ENCODE measurements at regions of chr6 and their contacts with region 1.

Region 1: GRCh38 chr6:116279260-116280063 is at the start of gene TSPYL1:
- DNase-seq: peak; percentile 89 to 98 (median 92)
- ATAC-seq: peak; percentile 84
- H3K4me3 ChIP-seq: peak within 1 kb of the TSS; percentile 76
- H3K4me3 Mint-ChIP-seq: peak within 1 kb of the TSS; percentile 96
- H3K27ac ChIP-seq: peak within 1 kb of the TSS; percentile 97 to 99
- H3K27ac Mint-ChIP-seq: peak within 1 kb of the TSS; percentile 95
- H3K4me1 ChIP-seq: peaks cover 41% of the 10 kb centered on the region
- H3K4me1 Mint-ChIP-seq: peaks cover 69% of the 10 kb centered on the region
- H3K27me3 ChIP-seq: no peaks in the 10 kb centered on the region
- H3K27me3 Mint-ChIP-seq: no peaks in the 10 kb centered on the region
- CTCF ChIP-seq: no peak
- total RNA-seq, gene TSPYL1: 225 to 226 TPM

Region 2: GRCh38 chr6:116217069-116217468 is 62.4 kb before region 1 on chr6:
- CTCF ChIA-PET with region 1: interaction called, 5 read pairs
- POLR2A ChIA-PET with region 1: interaction called, 12 read pairs
- intact Hi-C with region 1: loop called in 1 of 2 experiments (anchors 5 kb)
- DNase-seq: peak in 3 of 14 experiments; percentile 50 to 61 (median 59)
- ATAC-seq: peak; percentile 95
- H3K4me3 ChIP-seq: no peak overlapping the region
- H3K4me3 Mint-ChIP-seq: no peak overlapping the region
- H3K27ac ChIP-seq: no peak overlapping the region
- H3K27ac Mint-ChIP-seq: no peak overlapping the region
- H3K4me1 ChIP-seq: no peaks in the 10 kb centered on the region
- H3K4me1 Mint-ChIP-seq: peaks cover 7% of the 10 kb centered on the region
- H3K27me3 ChIP-seq: no peaks in the 10 kb centered on the region
- H3K27me3 Mint-ChIP-seq: no peaks in the 10 kb centered on the region
- CTCF ChIP-seq: peak; percentile 64

Region 3: GRCh38 chr6:116268589-116269293 is 10.7 kb before region 1 on chr6:
- CTCF ChIA-PET with region 1: interaction called, 42 read pairs
- POLR2A ChIA-PET with region 1: interaction called, 92 read pairs
- intact Hi-C with region 1: no loop called
- DNase-seq: peak in 3 of 14 experiments; percentile 67 to 81 (median 76)
- ATAC-seq: peak; percentile 95
- H3K4me3 ChIP-seq: no peak overlapping the region
- H3K4me3 Mint-ChIP-seq: no peak overlapping the region
- H3K27ac ChIP-seq: peak overlapping the region in 1 of 2 donors; percentile 10
- H3K27ac Mint-ChIP-seq: peak overlapping the region; percentile 4
- H3K4me1 ChIP-seq: peaks cover 9% of the 10 kb centered on the region
- H3K4me1 Mint-ChIP-seq: peaks cover 38% of the 10 kb centered on the region
- H3K27me3 ChIP-seq: no peaks in the 10 kb centered on the region
- H3K27me3 Mint-ChIP-seq: no peaks in the 10 kb centered on the region
- CTCF ChIP-seq: peak; percentile 94

Region 4: DNA sequence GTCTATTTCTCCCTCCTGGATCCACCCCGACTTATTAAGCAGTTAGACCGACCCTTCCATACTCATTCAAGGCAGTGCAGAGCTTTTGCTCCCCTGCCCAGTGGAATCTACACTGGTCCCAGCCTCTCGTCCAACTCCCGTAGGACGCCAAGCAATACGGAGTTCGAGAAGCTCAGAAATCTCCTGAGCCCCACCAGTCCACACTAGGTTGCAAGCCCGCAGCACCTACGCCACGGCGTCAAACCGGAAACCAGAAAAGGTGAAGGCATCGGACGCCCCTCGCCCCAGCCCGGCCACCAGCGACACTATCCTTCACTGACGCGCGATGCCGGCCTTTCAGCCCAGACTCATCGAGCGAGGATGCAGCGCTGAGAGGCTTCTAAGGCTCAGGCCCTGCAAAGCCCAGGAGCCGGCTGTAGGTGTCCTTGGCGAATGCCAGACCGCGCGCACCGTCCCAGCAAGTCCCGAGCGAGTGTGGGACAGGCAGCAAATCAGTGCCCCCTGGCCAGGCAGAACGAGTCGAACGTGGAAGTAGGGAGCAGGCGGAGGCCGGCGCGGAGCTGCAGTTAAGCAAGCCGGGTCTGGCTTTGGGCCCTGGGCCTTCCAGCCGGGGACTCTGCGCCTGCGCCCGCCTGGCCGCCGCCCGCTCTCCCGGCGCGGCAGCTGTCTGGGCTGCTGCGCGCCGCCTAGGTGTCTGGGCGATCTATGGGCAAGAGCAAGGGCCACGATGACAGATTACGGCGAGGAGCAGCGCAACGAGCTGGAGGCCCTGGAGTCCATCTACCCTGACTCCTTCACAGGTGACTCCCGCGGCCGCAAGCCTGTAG is 291.6 kb after region 1 on chr6 and contains the start of gene RWDD1:
- CTCF ChIA-PET with region 1: interaction called, 6 read pairs
- POLR2A ChIA-PET with region 1: interaction called, 121 read pairs
- intact Hi-C with region 1: loop called (anchors 2 to 5 kb)
- DNase-seq: peak; percentile 96 to 100 (median 97)
- ATAC-seq: peak; percentile 94
- H3K4me3 ChIP-seq: peak within 1 kb of the TSS; percentile 90
- H3K4me3 Mint-ChIP-seq: peak within 1 kb of the TSS; percentile 95
- H3K27ac ChIP-seq: peak within 1 kb of the TSS; percentile 85 to 95
- H3K27ac Mint-ChIP-seq: peak within 1 kb of the TSS; percentile 97
- H3K4me1 ChIP-seq: peaks cover 11% of the 10 kb centered on the region
- H3K4me1 Mint-ChIP-seq: peaks cover 55% of the 10 kb centered on the region
- H3K27me3 ChIP-seq: no peaks in the 10 kb centered on the region
- H3K27me3 Mint-ChIP-seq: no peaks in the 10 kb centered on the region
- CTCF ChIP-seq: no peak
- total RNA-seq, gene RWDD1: 60.3 to 60.5 TPM

Region 5: DNA sequence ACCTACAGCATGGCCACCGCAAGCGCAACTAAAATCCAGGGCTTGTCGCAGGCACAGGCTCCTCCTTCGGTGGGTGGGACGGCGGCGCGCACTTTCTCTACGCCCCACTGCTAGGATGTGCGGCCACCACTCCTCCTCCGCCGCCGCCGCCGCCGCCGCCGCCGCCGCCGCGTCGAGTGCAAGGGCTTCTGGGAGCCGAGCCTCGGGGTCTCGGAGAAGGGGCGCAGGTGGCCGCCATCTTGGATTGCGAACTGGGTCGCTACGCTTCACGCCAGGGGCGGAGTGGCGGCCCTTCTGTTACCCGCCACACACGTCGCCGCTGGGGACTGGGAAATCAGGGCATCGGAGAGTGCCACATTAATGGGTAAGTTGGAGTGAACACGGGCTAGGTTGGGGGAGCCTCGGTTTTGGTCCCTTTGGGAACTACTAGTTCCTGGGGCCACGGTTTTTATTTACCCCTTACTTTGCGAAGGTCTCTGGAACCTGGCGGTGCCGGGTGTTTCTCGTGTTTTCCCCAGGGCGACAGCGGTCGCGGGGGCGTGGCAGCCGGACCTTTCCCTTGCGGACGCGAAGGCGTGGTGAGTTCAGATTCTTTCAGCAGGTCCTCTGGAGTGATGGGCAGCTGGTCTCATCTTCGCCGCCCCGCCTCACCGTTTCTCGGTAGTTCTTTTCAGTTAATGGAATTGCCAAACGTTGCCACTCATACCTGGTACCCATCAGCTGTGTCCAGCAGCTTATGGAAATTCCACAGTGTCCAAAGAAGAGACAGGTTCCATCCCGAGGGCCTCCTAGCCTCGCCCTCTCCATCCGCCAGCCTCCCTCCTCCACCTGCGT is 401.7 kb after region 1 on chr6 and contains the start of gene KPNA5:
- CTCF ChIA-PET with region 1: no interaction called
- POLR2A ChIA-PET with region 1: interaction called, 25 read pairs
- intact Hi-C with region 1: loop called in 1 of 2 experiments (anchors 5 kb)
- DNase-seq: peak; percentile 83 to 96 (median 90)
- ATAC-seq: peak; percentile 93
- H3K4me3 ChIP-seq: peak within 1 kb of the TSS; percentile 82
- H3K4me3 Mint-ChIP-seq: peak within 1 kb of the TSS; percentile 99
- H3K27ac ChIP-seq: peak within 1 kb of the TSS; percentile 85 to 89
- H3K27ac Mint-ChIP-seq: peak within 1 kb of the TSS; percentile 94
- H3K4me1 ChIP-seq: peaks cover 28% of the 10 kb centered on the region
- H3K4me1 Mint-ChIP-seq: peaks cover 60% of the 10 kb centered on the region
- H3K27me3 ChIP-seq: no peaks in the 10 kb centered on the region
- H3K27me3 Mint-ChIP-seq: no peaks in the 10 kb centered on the region
- CTCF ChIP-seq: no peak
- total RNA-seq, gene KPNA5: 60.0 to 66.0 TPM

Measured in CD4-positive, alpha-beta T cell (primary cell).